ENCODE measurements at regions of chr12 and their contacts with region 1.

Region 1: DNA sequence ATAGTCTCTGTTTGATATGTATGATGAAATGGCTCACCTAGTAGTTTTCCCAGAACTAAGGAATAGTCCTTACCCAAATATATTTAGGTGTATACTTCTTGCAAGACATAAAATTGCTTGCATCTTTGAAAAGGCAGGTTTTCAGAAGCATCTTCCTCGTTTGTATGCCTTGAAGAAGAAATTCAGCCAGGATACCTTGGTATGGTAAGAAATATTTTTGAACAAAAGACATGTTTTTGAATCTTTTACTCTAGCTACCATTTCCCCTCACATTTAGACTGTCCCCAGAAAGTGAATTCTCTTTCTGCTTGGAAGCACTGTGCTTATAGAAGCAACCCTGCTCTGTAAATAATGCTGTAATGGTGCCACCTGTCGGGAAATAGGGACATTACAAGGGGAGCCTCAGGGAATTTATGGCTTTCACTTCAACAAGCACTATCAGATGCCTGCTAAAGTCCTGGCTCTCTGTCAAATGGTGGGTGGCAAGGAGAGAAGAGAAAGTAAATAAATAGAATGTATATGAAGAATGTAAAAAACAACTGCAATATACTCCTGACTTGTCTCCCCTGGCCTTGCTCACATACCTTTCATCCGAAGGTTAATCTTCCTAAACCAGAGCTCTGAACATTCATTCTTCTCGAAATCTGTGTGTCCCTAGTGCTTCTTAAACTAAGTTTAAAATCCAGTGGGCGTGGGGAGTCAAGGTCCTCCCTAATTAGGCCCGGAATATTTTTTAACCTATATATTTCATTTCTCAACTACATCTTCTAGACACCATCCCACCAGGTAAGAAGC is 6.1 kb downstream of the CCDC184 start:
- DNase-seq: peak; percentile 81
- ATAC-seq: peak; percentile 75
- H3K4me3 Mint-ChIP-seq: no peak overlapping the region
- H3K27ac Mint-ChIP-seq: no peak overlapping the region
- H3K4me1 Mint-ChIP-seq: peaks cover 16% of the 10 kb centered on the region
- H3K27me3 Mint-ChIP-seq: peaks cover 56% of the 10 kb centered on the region

Region 2: GRCh38 chr12:48175613-48176416 is 13.7 kb before region 1 on chr12:
- CTCF ChIA-PET with region 1: interaction called, 18 read pairs
- DNase-seq: no peak
- ATAC-seq: peak; percentile 53
- H3K4me3 Mint-ChIP-seq: peak overlapping the region; percentile 48
- H3K27ac Mint-ChIP-seq: peak overlapping the region; percentile 71
- H3K4me1 Mint-ChIP-seq: peaks cover 18% of the 10 kb centered on the region
- H3K27me3 Mint-ChIP-seq: peaks cover 16% of the 10 kb centered on the region